BJ (cell line): ENCODE measurements at regions of chr13 and their contacts with region 1.

Region 1: GRCh38 chr13:21971662-21972621 is 301.1 kb downstream of the FGF9 start:
- DNase-seq: peak; percentile 46
- H3K4me3 ChIP-seq: no peak overlapping the region
- H3K27me3 ChIP-seq: no peaks in the 10 kb centered on the region
- CTCF ChIP-seq: no peak

Region 2: DNA sequence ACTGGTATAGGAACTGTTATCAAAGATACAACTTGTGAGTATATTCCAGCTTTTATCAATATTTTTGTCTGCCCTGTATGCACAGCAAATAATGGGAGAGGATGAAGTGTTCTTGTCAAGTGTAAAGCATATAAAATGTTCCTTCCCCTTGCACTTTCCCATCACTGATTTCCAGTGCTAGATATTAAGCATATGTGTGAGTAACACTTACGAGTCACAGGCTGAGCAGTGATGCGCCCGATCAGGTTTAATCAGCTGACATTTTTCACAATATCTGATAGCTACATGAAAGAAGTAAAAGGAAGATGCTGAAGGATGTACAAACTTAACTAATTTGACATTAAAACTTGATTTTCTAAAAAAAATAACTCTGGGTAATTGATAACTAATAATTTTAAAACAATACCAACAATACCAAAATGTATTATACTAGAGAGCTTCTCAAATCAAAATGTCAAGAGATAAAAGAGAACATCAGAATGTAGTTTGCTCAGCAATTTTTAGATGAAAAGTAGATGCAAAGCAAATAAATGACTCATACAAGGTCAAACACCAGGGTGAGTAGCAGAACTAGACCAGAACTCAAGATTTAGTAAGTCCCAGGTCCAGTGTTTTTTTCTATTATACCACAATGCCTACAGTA is 569.2 kb before region 1 on chr13:
- CTCF ChIA-PET with region 1: no interaction called
- POLR2A ChIA-PET with region 1: no interaction called
- DNase-seq: no peak
- H3K4me3 ChIP-seq: no peak overlapping the region
- H3K27me3 ChIP-seq: no peaks in the 10 kb centered on the region
- CTCF ChIP-seq: no peak

Region 3: GRCh38 chr13:21717817-21718216 is 254.1 kb before region 1 on chr13:
- CTCF ChIA-PET with region 1: no interaction called
- POLR2A ChIA-PET with region 1: no interaction called
- DNase-seq: no peak
- H3K4me3 ChIP-seq: no peak overlapping the region
- H3K27me3 ChIP-seq: no peaks in the 10 kb centered on the region
- CTCF ChIP-seq: no peak

Region 4: GRCh38 chr13:22017226-22017625 is 45.3 kb after region 1 on chr13:
- CTCF ChIA-PET with region 1: no interaction called
- POLR2A ChIA-PET with region 1: interaction called, 11 read pairs
- DNase-seq: no peak
- H3K4me3 ChIP-seq: no peak overlapping the region
- H3K27me3 ChIP-seq: no peaks in the 10 kb centered on the region
- CTCF ChIP-seq: no peak